Ascending aorta (tissue), 2 donors: ENCODE measurements at regions of chr16 and their contacts with region 1.

Region 1: DNA sequence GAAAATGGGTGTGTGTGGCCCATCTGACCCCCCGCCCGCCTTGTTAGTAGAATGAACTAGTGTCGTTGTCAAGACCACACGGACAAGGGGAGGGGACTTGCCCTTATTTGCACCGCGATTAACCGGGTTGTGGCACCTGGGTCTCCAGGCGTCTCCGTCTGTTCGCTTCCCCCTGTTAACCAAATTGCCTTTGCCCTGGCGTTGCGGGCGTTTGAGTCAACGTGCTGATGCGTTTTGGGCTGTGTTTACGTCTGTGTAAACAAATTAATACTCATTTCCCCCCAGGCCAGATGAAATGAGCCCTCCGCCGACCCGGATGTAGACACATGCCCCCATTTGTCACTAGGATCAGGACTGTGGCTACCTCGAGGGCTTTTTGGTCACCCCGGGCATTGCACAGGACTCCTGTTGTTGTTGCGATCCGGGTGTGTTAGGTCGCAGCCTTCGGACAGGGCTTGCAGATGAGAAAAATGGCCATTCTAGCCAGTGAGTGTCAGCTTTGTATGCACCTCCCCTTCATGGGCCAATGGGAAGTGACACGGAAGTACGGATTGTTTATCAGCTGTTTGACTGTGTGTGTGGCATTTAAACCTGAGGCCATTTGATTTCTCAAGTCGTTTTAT is 906 bp downstream of the RBL2 start:
- DNase-seq: peak; percentile 41 to 88
- H3K4me3 ChIP-seq: peak overlapping the region; percentile 99
- H3K27ac ChIP-seq: peak overlapping the region; percentile 98
- H3K4me1 ChIP-seq: peaks cover 0 to 13% of the 10 kb centered on the region in 2 donors
- H3K27me3 ChIP-seq: no peaks in the 10 kb centered on the region
- CTCF ChIP-seq: no peak

Region 2: DNA sequence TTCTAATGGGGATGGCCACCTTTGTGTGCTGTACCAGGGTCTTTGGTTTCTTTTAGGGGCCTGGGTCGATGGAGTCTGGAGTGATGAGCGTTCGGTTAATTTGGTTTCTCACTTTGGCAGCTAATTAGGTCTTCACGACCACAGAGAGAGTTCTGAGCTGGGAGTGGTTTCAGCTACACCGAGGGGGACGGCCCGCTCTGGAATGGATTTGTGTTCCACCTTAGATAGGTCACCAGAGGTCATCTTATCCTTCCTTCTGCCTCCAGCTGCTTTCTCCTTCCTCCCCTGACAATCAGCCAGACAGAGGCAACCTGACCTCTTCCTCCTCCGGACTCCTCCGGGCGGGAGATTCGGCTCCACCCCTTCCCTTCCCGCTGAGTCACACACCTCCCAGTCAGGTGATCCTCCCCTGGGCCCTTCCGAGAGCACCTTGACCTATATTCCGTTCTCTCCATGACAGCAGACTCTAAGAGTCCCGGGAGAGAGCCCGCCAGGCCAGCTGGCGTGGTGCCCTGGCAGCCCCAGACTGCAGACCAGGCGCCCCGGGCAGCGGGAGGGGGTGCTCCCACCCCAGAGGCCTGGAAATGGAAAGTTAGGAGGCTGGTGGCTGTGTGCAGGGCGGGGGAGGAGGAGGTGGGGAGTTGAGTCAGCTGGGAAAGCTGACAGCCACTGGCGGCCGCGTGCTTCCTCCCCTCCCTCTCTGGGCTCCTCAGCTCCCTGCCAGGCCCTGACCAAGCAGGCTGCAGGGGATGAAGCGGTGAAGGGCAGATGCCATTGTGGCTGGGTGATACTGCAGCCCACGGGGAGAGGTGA is 335.7 kb before region 1 on chr16:
- intact Hi-C with region 1: loop called (anchors 10 kb)
- DNase-seq: peak; percentile 79 to 96
- H3K4me3 ChIP-seq: peak overlapping the region; percentile 52 to 61
- H3K27ac ChIP-seq: peak overlapping the region; percentile 93 to 94
- H3K4me1 ChIP-seq: peaks cover 5 to 32% of the 10 kb centered on the region in 2 donors
- H3K27me3 ChIP-seq: no peaks in the 10 kb centered on the region
- CTCF ChIP-seq: no peak

Region 3: GRCh38 chr16:53341792-53342191 is 93.4 kb before region 1 on chr16:
- intact Hi-C with region 1: no loop called
- DNase-seq: no peak
- H3K4me3 ChIP-seq: no peak overlapping the region
- H3K27ac ChIP-seq: no peak overlapping the region
- H3K4me1 ChIP-seq: no peaks in the 10 kb centered on the region
- H3K27me3 ChIP-seq: no peaks in the 10 kb centered on the region
- CTCF ChIP-seq: no peak

Region 4: GRCh38 chr16:53503270-53503923 is 68.2 kb after region 1 on chr16:
- intact Hi-C with region 1: loop called (anchors 1 kb)
- DNase-seq: peak; percentile 100
- H3K4me3 ChIP-seq: peak overlapping the region; percentile 83 to 93
- H3K27ac ChIP-seq: peak overlapping the region; percentile 91 to 97
- H3K4me1 ChIP-seq: peaks cover 10 to 27% of the 10 kb centered on the region in 2 donors
- H3K27me3 ChIP-seq: no peaks in the 10 kb centered on the region
- CTCF ChIP-seq: no peak

Region 5: DNA sequence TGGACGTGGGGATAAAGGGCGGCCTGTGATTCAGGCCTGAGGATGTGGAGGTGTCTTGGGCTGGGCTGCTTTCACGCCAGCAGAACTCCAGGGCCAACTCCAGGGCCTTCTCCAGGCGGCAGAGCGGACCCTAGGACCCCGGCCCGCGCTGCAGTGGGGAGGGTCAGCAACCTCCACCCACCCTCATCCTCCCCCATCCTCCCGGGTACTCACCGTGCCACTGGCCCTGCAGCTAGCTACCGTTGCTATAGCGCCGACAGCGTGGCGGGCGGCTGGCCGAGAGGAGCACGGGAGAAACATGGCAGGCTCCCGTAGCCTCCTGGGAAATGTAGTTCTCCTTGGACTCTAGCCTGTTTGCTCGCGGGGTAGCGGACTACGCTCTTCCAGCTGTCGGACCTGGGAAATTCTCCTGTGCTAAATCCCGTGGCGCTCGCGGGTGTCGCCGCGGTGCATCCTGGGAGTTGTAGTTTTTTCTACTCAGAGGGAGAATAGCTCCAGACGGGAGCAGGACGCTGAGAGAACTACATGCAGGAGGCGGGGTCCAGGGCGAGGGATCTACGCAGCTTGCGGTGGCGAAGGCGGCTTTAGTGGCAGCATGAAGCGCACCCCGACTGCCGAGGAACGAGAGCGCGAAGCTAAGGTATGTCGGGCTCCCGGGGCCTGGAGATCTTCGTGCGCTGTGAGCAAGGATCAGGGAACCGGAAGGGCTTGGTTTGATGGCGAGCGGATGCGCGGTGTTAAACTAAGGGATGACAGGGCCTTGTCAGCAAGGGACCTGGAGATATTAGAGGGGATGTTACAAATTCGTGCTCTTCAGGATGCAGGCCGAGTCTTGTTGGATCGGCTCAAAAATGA is 268.6 kb after region 1 on chr16 and contains the starts of genes FTO and RPGRIP1L:
- intact Hi-C with region 1: loop called (anchors 5 kb)
- DNase-seq: peak; percentile 98 to 100
- H3K4me3 ChIP-seq: peak within 1 kb of the TSS; percentile 75 to 84
- H3K27ac ChIP-seq: peak within 1 kb of the TSS; percentile 58 to 70
- H3K4me1 ChIP-seq: peaks cover 0 to 3% of the 10 kb centered on the region in 2 donors
- H3K27me3 ChIP-seq: no peaks in the 10 kb centered on the region
- CTCF ChIP-seq: peak in 1 of 3 experiments; percentile 14
- total RNA-seq, gene FTO: 50.2 TPM
- total RNA-seq, gene RPGRIP1L: 0.96 TPM